Panc1 (cell line): ENCODE measurements at regions of chr11 and their contacts with region 1.

Region 1: DNA sequence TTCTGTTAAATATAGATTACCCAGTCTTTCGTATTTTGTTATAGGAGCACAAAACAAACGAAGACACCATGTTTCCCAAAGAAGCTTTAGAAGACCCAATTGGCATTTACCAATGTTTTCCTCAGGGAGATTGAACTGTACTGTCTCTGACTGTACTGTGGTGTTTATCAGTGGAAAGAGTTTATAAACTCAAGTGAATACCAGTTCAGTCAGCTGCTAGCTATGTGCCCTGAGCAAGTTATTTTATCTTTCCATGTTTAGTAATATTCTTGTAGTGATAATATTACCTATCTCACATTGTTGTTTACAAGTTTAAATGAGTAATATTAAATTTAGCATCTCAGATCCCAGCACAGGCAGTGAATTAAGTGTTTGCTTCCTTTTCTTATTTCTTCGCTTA is 773.2 kb downstream of the KCNA4 start:
- DNase-seq: no peak
- ATAC-seq: no peak
- H3K4me3 ChIP-seq: no peak overlapping the region
- H3K27ac ChIP-seq: no peak overlapping the region
- H3K4me1 ChIP-seq: no peaks in the 10 kb centered on the region
- H3K27me3 ChIP-seq: no peaks in the 10 kb centered on the region
- CTCF ChIP-seq: no peak

Region 2: DNA sequence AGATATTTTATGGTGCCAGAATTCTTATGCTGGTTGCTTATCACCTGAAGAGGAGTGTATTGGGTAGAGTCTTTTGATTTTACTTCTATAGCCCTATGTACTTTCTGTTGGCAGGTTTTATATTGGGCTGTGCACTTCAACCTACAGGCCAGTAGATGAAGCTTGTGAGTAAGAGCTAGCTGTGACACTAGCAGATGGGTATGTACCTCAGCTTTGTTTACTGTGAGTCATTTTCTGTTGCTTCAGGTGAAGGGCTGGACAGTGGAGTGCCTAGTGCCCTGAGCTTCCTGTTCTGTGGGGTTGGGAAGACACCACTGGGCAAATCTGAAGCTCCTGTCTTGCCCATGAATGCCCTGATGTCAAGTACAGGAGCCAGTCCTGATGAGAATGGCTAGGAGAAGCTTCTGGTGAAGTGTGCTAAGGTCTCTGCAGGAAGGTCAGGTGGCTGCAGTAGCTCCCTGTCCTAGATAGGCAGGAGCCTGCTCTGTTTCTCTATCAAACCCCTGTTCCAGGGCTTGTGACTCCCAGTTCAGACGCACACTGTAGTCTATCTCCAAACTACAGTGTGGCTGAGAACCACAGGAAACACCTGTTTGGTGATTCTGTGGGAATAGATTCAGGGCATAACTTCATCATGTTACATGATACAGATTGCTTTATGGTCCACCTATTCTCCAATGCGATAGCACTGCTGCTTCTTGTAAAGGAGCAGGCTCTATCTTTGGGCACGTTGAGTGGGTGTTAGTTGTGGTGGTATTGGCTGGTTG is 17.5 kb after region 1 on chr11:
- CTCF ChIA-PET with region 1: no interaction called
- POLR2A ChIA-PET with region 1: interaction called, 10 read pairs
- in situ Hi-C with region 1: no loop called
- intact Hi-C with region 1: no loop called
- DNase-seq: peak; percentile 59
- ATAC-seq: no peak
- H3K4me3 ChIP-seq: no peak overlapping the region
- H3K27ac ChIP-seq: no peak overlapping the region
- H3K4me1 ChIP-seq: no peaks in the 10 kb centered on the region
- H3K27me3 ChIP-seq: no peaks in the 10 kb centered on the region
- CTCF ChIP-seq: no peak